ENCODE measurements at regions of chr3 and their contacts with region 1.

Region 1: GRCh38 chr3:188792793-188793192 is 379.0 kb upstream of the TPRG1 start:
- DNase-seq: no peak
- H3K4me3 Mint-ChIP-seq: no peak overlapping the region
- H3K27ac Mint-ChIP-seq: no peak overlapping the region
- H3K4me1 Mint-ChIP-seq: peaks cover 3% of the 10 kb centered on the region
- H3K27me3 Mint-ChIP-seq: no peaks in the 10 kb centered on the region

Region 2: DNA sequence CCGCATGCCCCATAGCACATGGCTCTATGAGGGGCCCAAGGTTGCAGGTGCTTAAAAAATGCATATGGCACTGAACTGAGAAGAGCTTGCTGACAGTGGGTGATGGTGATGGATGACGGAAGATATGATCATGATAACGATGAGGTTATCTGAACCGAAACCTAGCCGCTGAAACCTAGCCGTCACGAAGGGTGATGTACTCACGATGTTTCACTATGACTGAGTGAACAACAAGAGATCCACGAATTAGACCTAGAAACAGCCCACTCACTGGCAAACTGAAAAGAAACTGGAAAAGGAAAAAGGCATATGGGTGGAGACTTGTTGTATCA is 989.9 kb before region 1 on chr3:
- CTCF ChIA-PET with region 1: no interaction called
- intact Hi-C with region 1: loop called (anchors 1 kb)
- DNase-seq: peak; percentile 89
- H3K4me3 Mint-ChIP-seq: peak overlapping the region; percentile 1
- H3K27ac Mint-ChIP-seq: peak overlapping the region; percentile 79
- H3K4me1 Mint-ChIP-seq: peaks cover 95% of the 10 kb centered on the region
- H3K27me3 Mint-ChIP-seq: no peaks in the 10 kb centered on the region

Region 3: DNA sequence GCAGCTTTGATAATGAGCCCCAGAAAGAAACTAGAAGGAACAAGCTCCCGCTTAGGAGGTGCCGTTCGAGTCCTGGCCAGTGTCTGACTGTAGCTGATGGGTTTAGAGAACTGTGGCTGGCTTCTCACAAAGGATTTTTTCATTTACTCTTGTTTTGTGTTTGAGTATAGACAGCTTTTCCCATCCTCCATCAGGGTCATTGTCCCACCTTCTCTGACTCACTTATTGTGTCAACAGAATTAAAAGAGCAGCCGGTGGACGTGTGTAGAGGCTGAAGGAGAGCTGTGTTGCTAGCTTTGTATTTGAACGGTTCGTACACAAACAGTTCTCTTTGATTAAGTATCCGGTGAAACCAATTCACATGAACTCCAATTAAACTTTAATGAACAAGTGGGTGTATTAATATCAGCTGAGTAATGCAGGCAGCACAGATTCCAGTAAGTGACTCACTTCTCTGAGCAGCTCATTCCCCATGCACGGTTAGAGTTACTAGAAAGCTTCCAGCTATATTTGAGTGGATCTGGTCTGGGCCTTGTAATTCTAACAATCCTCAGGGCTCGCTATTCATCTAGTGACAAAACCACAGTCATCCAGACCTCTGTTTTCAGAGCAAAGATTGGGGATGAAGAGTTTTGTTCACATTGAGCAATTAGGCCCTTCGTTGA is 497.8 kb before region 1 on chr3:
- CTCF ChIA-PET with region 1: no interaction called
- intact Hi-C with region 1: loop called (anchors 1 kb)
- DNase-seq: peak; percentile 49
- H3K4me3 Mint-ChIP-seq: no peak overlapping the region
- H3K27ac Mint-ChIP-seq: peak overlapping the region; percentile 69
- H3K4me1 Mint-ChIP-seq: peaks cover 85% of the 10 kb centered on the region
- H3K27me3 Mint-ChIP-seq: no peaks in the 10 kb centered on the region

Region 4: DNA sequence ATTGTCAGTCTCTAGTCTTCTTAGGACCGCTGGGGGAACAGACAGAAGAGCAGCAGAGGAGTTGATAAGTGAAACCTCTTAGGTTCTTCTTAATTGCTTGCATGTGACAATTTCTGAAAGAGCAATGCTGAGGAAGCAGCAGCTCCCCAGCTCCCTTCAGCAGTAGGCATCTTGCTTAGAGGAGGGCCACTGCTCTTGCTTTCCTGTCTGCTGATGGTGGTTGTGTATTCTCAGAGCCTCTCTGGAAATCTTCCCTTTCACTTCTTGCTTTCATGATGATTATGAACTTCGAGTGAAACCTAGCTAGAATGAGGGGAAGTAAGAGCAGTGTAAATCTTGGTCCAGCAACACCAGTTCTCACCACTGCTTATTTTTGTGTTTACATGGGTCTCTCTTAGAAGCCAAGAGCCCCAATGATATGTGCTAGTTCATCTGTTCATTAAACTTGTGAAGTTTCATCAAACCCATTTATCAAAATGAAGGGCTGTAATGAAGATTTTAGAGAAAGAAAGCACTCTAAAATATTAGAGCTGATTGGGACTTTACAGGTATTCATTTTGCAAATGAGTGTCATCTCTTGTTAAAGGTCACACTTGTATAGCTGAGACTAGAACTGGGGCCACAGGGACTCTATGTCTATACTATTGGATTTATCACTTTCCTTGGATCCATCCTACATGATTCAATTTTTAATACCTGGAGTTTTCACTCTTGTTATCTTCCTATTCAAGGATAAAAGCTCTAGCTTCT is 392.1 kb before region 1 on chr3:
- CTCF ChIA-PET with region 1: no interaction called
- intact Hi-C with region 1: loop called (anchors 2 kb)
- DNase-seq: peak; percentile 60
- H3K4me3 Mint-ChIP-seq: no peak overlapping the region
- H3K27ac Mint-ChIP-seq: peak overlapping the region; percentile 43
- H3K4me1 Mint-ChIP-seq: peaks cover 70% of the 10 kb centered on the region
- H3K27me3 Mint-ChIP-seq: no peaks in the 10 kb centered on the region

Region 5: GRCh38 chr3:188641076-188641475 is 151.7 kb before region 1 on chr3:
- CTCF ChIA-PET with region 1: no interaction called
- intact Hi-C with region 1: no loop called
- DNase-seq: no peak
- H3K4me3 Mint-ChIP-seq: no peak overlapping the region
- H3K27ac Mint-ChIP-seq: no peak overlapping the region
- H3K4me1 Mint-ChIP-seq: no peaks in the 10 kb centered on the region
- H3K27me3 Mint-ChIP-seq: no peaks in the 10 kb centered on the region

Region 6: DNA sequence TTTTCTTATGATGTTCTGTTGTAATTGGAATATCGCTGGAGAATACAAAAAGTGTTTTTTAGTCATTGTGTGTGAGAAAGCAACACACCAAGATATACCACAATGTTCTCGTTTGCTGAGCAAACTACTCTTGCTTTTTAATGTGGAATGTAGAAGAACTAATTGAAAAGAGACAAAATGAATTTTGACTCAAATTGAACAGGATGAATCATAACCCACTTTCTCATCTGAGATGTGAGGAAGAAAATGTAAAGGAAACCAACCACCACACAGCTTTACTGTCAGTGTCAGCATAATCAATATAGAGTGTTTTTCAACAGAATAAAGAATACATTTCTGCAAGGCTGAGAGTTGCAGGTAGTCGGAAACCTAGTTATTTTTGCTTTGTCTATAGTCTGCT is 69.8 kb before region 1 on chr3:
- CTCF ChIA-PET with region 1: no interaction called
- intact Hi-C with region 1: loop called (anchors 1 kb)
- DNase-seq: no peak
- H3K4me3 Mint-ChIP-seq: no peak overlapping the region
- H3K27ac Mint-ChIP-seq: no peak overlapping the region
- H3K4me1 Mint-ChIP-seq: peaks cover 26% of the 10 kb centered on the region
- H3K27me3 Mint-ChIP-seq: peaks cover 2% of the 10 kb centered on the region

Region 7: DNA sequence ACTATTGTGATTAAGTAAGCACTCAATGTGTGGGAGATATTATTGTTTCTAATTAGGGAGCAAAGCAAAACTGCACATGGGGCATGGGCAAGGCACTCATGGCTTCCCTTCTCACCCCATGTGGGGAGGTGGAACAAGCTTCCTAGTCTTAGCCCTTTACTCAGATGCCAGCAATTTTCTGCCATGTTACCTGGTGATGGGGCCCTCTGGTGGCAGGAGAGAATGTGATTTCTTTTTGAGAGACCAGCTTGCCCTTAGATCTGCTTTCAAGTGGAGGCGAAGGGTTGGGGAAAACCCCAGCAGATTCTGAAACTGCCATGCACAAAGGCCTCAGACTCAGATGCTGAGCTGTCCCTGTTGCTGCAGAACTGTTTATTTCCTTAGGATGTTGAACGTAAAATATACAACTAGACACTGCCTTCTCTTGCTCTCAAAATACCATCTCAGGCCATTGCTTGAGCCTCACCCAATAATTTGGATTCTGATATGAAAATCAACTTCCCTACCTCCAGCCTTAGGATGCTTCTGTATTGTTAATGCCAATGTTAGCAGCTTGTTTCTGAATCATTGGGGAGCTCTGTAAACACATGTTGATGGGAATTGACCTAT is 248.8 kb after region 1 on chr3:
- CTCF ChIA-PET with region 1: no interaction called
- intact Hi-C with region 1: loop called (anchors 1 kb)
- DNase-seq: peak; percentile 90
- H3K4me3 Mint-ChIP-seq: no peak overlapping the region
- H3K27ac Mint-ChIP-seq: no peak overlapping the region
- H3K4me1 Mint-ChIP-seq: peaks cover 29% of the 10 kb centered on the region
- H3K27me3 Mint-ChIP-seq: peaks cover 3% of the 10 kb centered on the region

Region 8: GRCh38 chr3:189570916-189571315 is 778.1 kb after region 1 on chr3:
- CTCF ChIA-PET with region 1: no interaction called
- intact Hi-C with region 1: loop called (anchors 1 kb)
- DNase-seq: no peak
- H3K4me3 Mint-ChIP-seq: no peak overlapping the region
- H3K27ac Mint-ChIP-seq: no peak overlapping the region
- H3K4me1 Mint-ChIP-seq: peaks cover 30% of the 10 kb centered on the region
- H3K27me3 Mint-ChIP-seq: no peaks in the 10 kb centered on the region

Measured in activated naive CD4-positive, alpha-beta T cell treated with anti-CD3 and anti-CD28 coated beads for 36 hours (primary cell).